Activated CD4-positive, alpha-beta memory T cell treated with anti-CD3 and anti-CD28 coated beads, Interleukin-2, amount 10 ng/mL, durations not matched to agents 7 days and 5 days (primary cell): ENCODE measurements at regions of chr9 and their contacts with region 1.

Region 1: DNA sequence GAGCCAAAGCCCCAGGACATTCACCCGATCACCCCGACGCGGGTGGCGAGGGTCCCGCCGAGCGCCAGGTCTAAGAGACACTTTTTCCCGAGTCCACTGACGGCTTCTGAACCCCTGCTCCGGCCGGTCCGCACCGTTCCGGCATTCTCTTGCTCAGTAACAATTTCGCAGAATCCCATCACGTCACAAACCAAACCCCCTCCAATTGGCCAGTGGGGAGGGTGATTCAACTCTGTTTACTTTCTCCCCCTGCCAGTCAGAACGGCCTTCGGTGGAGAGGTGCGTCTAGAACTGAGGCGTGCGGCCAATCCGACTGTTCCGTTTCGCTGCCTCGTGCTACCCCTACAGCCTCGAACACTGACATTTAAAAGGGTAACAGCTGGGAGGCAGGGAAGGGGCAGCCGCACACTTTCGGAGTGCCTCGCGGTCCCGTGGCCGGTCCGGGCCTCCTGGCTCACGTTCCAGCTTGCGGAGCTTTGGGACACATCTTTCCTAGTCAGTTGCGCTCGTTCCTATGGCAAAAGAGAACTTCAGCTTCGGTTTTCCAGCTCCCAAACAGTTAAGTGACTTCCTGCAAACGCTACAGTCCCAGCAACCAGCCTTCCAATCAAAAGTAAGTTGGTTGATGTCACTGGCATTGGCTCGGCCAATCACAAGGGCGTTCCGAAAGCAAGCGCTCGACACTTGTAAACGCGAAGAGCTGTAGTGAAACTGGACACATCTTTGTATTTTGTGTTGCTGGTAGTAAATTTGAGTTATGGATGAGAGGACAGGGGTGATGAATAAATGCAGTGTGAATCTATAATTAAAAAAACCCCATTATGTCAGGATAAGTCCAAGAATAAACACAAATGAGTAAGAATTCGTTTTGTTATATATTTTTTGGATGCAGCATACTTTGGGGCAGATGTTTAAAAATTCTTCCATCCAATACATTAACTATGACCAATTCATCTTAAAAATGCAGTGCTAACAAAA is at the start of gene KLF9:
- DNase-seq: peak; percentile 96
- H3K4me3 Mint-ChIP-seq: peak within 1 kb of the TSS; percentile 96
- H3K27ac Mint-ChIP-seq: peak within 1 kb of the TSS; percentile 100
- H3K4me1 Mint-ChIP-seq: peaks cover 48% of the 10 kb centered on the region
- H3K27me3 Mint-ChIP-seq: no peaks in the 10 kb centered on the region
- total RNA-seq, gene KLF9: 19.2 to 19.6 TPM

Region 2: GRCh38 chr9:69936427-69936826 is 477.7 kb before region 1 on chr9:
- CTCF ChIA-PET with region 1: no interaction called
- POLR2A ChIA-PET with region 1: no interaction called
- DNase-seq: no peak
- H3K4me3 Mint-ChIP-seq: no peak overlapping the region
- H3K27ac Mint-ChIP-seq: no peak overlapping the region
- H3K4me1 Mint-ChIP-seq: no peaks in the 10 kb centered on the region
- H3K27me3 Mint-ChIP-seq: peaks cover 13% of the 10 kb centered on the region

Region 3: GRCh38 chr9:70258692-70259511 is 155.2 kb before region 1 on chr9 and contains the start of gene SMC5:
- CTCF ChIA-PET with region 1: no interaction called
- POLR2A ChIA-PET with region 1: interaction called, 35 read pairs
- DNase-seq: peak; percentile 92
- H3K4me3 Mint-ChIP-seq: peak within 1 kb of the TSS; percentile 82
- H3K27ac Mint-ChIP-seq: peak within 1 kb of the TSS; percentile 80
- H3K4me1 Mint-ChIP-seq: peaks cover 50% of the 10 kb centered on the region
- H3K27me3 Mint-ChIP-seq: no peaks in the 10 kb centered on the region
- total RNA-seq, gene SMC5: 36.2 to 38.8 TPM

Region 4: GRCh38 chr9:70392189-70392588 is 21.9 kb before region 1 on chr9:
- CTCF ChIA-PET with region 1: interaction called, 3 read pairs
- POLR2A ChIA-PET with region 1: interaction called, 15 read pairs
- DNase-seq: no peak
- H3K4me3 Mint-ChIP-seq: no peak overlapping the region
- H3K27ac Mint-ChIP-seq: no peak overlapping the region
- H3K4me1 Mint-ChIP-seq: peaks cover 50% of the 10 kb centered on the region
- H3K27me3 Mint-ChIP-seq: no peaks in the 10 kb centered on the region

Region 5: GRCh38 chr9:70398145-70398556 is 15.9 kb before region 1 on chr9:
- CTCF ChIA-PET with region 1: interaction called, 3 read pairs
- POLR2A ChIA-PET with region 1: interaction called, 65 read pairs
- DNase-seq: no peak
- H3K4me3 Mint-ChIP-seq: no peak overlapping the region
- H3K27ac Mint-ChIP-seq: peak overlapping the region; percentile 78
- H3K4me1 Mint-ChIP-seq: peaks cover 53% of the 10 kb centered on the region
- H3K27me3 Mint-ChIP-seq: no peaks in the 10 kb centered on the region

Region 6: DNA sequence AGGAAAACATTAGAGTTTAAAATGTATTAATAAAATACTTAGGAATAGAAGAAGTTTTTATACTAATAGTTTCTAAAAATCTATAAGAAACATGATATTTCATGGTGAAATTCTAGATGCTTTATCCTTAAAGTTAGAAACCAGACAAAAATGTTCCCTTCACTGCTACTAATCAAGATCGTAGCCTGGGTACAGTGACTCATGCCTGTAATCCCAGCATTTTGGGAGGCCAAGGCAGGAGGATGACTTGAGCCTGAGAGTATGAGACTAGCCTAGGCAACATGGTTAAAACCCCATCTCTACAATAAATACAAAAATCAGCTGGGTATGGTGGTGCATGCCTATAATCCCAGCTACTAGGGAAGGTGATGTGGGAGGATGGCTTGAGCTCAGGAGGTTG is 30.8 kb after region 1 on chr9:
- CTCF ChIA-PET with region 1: no interaction called
- POLR2A ChIA-PET with region 1: no interaction called
- DNase-seq: no peak
- H3K4me3 Mint-ChIP-seq: no peak overlapping the region
- H3K27ac Mint-ChIP-seq: no peak overlapping the region
- H3K4me1 Mint-ChIP-seq: no peaks in the 10 kb centered on the region
- H3K27me3 Mint-ChIP-seq: no peaks in the 10 kb centered on the region

Region 7: GRCh38 chr9:70519912-70520724 is 106.0 kb after region 1 on chr9:
- CTCF ChIA-PET with region 1: no interaction called
- POLR2A ChIA-PET with region 1: interaction called, 11 read pairs
- DNase-seq: peak; percentile 18
- H3K4me3 Mint-ChIP-seq: peak overlapping the region; percentile 26
- H3K27ac Mint-ChIP-seq: peak overlapping the region; percentile 55
- H3K4me1 Mint-ChIP-seq: peaks cover 20% of the 10 kb centered on the region
- H3K27me3 Mint-ChIP-seq: no peaks in the 10 kb centered on the region

Region 8: DNA sequence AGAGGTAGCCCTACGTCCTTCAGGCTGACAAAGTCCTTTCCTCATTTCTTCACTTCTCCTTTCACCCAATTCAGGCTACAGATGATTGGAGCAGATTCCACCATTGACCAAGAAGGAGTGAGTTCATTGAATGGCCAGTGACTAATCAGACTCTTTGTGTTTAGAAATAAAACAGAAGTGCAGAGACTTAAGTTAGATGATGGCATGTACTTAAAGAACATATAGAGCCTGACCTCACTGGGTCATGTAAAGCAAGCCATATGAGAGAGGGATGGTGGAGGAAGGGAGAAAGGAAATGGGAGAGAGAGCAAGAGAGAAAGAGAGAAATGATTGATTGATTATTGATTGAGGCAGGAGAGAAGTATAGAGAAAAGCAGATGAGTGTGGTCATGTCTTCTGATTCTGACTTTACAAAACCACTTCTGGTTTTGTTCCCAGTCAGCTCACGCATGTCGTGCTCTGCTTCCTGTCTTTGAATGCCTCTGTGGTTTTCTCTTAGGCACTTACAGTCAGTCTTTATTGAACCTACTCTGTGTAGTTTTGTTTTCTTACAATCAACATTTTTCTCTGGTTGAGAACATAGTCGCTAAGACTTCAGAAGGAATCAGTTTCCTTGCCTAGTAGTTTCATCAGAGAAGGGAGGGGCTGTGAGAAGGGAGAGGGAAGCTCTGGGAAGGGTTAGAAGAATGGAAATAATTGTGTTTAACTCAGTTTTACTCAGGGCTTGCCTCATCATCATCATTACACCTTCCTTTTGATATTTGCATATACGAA is 149.5 kb after region 1 on chr9:
- CTCF ChIA-PET with region 1: interaction called, 7 read pairs
- POLR2A ChIA-PET with region 1: interaction called, 85 read pairs
- DNase-seq: peak; percentile 79
- H3K4me3 Mint-ChIP-seq: peak overlapping the region; percentile 49
- H3K27ac Mint-ChIP-seq: peak overlapping the region; percentile 99
- H3K4me1 Mint-ChIP-seq: peaks cover 50% of the 10 kb centered on the region
- H3K27me3 Mint-ChIP-seq: no peaks in the 10 kb centered on the region

Region 9: GRCh38 chr9:70602321-70603019 is 188.4 kb after region 1 on chr9:
- CTCF ChIA-PET with region 1: interaction called, 31 read pairs
- POLR2A ChIA-PET with region 1: interaction called, 28 read pairs
- DNase-seq: peak; percentile 50
- H3K4me3 Mint-ChIP-seq: no peak overlapping the region
- H3K27ac Mint-ChIP-seq: no peak overlapping the region
- H3K4me1 Mint-ChIP-seq: no peaks in the 10 kb centered on the region
- H3K27me3 Mint-ChIP-seq: no peaks in the 10 kb centered on the region